Heart left ventricle (tissue), 16 donors: ENCODE measurements at regions of chr10 and their contacts with region 1.

Region 1: GRCh38 chr10:91479583-91479982 is 69.4 kb downstream of the HECTD2 start:
- DNase-seq: no peak
- ATAC-seq: no peak
- H3K4me3 ChIP-seq: no peak overlapping the region
- H3K27ac ChIP-seq: no peak overlapping the region
- H3K4me1 ChIP-seq: no peaks in the 10 kb centered on the region
- H3K27me3 ChIP-seq: no peaks in the 10 kb centered on the region
- CTCF ChIP-seq: no peak
- POLR2A ChIP-seq: no peak

Region 2: DNA sequence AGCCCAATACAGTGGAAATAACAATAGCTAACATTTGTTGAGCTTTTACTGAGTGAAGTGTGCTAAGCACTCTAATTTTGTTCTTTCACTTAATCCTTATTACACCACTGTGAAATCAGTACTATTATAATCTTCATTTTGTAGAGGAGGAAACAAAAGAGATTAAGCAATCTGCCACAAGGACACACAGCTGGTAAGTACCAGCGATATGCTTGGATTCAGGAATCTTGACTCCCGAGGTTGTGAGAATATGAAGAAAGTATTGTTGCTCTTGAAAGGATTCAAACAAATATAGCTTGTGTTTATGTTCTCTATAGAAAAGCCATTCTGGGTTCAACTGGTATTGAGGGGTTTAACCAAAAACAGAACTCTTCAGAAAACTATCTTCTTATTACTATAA is 163.1 kb before region 1 on chr10:
- intact Hi-C with region 1: no loop called
- DNase-seq: no peak
- ATAC-seq: no peak
- H3K4me3 ChIP-seq: no peak overlapping the region
- H3K27ac ChIP-seq: no peak overlapping the region
- H3K4me1 ChIP-seq: no peaks in the 10 kb centered on the region
- H3K27me3 ChIP-seq: peaks cover 0 to 5% (median 0%) of the 10 kb centered on the region in 9 donors
- CTCF ChIP-seq: no peak
- POLR2A ChIP-seq: no peak

Region 3: DNA sequence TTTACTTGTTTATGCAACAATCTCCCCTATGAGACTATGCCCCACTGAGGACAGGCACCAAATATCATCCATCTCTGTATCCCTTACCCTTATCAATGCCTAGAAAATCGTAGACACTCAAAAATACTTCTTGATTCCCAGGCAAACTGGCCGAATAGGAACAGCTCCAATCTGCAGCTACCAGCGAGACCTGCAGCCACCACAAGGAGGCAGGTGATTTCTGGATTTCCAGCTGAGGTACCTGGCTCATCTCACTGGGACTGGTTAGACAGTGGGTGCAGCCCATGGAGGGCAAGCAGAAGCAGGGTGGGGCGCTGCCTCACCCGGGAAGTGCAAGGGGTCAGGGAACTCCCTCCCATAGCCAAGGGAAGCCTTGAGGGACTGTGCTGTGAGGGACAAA is 164.1 kb after region 1 on chr10:
- intact Hi-C with region 1: loop called in 1 of 10 experiments (anchors 5 kb)
- DNase-seq: no peak
- ATAC-seq: no peak
- H3K4me3 ChIP-seq: no peak overlapping the region
- H3K27ac ChIP-seq: no peak overlapping the region
- H3K4me1 ChIP-seq: no peaks in the 10 kb centered on the region
- H3K27me3 ChIP-seq: no peaks in the 10 kb centered on the region
- CTCF ChIP-seq: peak in 4 of 12 donors; percentile 11 to 25 (median 18)
- POLR2A ChIP-seq: no peak